WTC11 (cell line): ENCODE measurements at regions of chr10 and their contacts with region 1.

Region 1: GRCh38 chr10:97888641-97889262 is 39.1 kb downstream of the GOLGA7B start:
- DNase-seq: no peak
- ATAC-seq: peak; percentile 54
- H3K4me3 Mint-ChIP-seq: no peak overlapping the region
- H3K27ac Mint-ChIP-seq: no peak overlapping the region
- H3K4me1 Mint-ChIP-seq: peaks cover 35% of the 10 kb centered on the region
- H3K27me3 Mint-ChIP-seq: no peaks in the 10 kb centered on the region; the same call in 1 of the 2 replicates
- CTCF ChIP-seq: no peak

Region 2: DNA sequence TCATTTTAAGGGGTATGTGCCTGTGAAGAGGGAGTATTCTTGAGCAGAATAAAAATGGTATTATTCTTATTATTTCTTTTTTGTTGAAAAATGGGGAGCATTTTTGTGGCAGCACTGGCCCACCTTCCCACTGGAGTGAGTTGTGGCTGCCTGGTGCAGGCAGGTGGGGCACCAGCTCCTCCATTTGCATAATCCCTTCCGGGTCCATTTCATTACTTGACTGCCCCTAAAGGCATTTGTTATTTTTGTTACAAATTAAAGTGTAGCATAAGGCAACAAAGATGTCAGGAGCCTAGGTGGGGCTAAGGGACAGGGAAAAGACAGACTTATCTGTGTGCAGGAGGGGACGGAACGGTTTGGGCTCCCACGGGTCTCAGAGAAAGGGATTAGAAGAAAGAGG is 12.3 kb before region 1 on chr10:
- CTCF ChIA-PET with region 1: interaction called, 16 read pairs
- POLR2A ChIA-PET with region 1: interaction called, 3 read pairs
- DNase-seq: no peak
- ATAC-seq: peak; percentile 51
- H3K4me3 Mint-ChIP-seq: peak overlapping the region; percentile 33; the same call in 1 of the 2 replicates
- H3K27ac Mint-ChIP-seq: no peak overlapping the region
- H3K4me1 Mint-ChIP-seq: peaks cover 16% of the 10 kb centered on the region
- H3K27me3 Mint-ChIP-seq: no peaks in the 10 kb centered on the region
- CTCF ChIP-seq: no peak

Region 3: GRCh38 chr10:99266387-99266786 is 1377.6 kb after region 1 on chr10:
- CTCF ChIA-PET with region 1: no interaction called
- POLR2A ChIA-PET with region 1: no interaction called
- DNase-seq: no peak
- ATAC-seq: peak; percentile 77
- H3K4me3 Mint-ChIP-seq: no peak overlapping the region
- H3K27ac Mint-ChIP-seq: no peak overlapping the region
- H3K4me1 Mint-ChIP-seq: peaks cover 13% of the 10 kb centered on the region
- H3K27me3 Mint-ChIP-seq: no peaks in the 10 kb centered on the region
- CTCF ChIP-seq: no peak